Body of pancreas (tissue), 4 donors: ENCODE measurements at regions of chr15 and their contacts with region 1.

Region 1: GRCh38 chr15:38683382-38684242 is 119.0 kb upstream of the RASGRP1 start:
- DNase-seq: peak; percentile 63 to 75 (median 70)
- ATAC-seq: peak; percentile 77
- H3K4me3 ChIP-seq: no peak overlapping the region
- H3K27ac ChIP-seq: no peak overlapping the region
- H3K4me1 ChIP-seq: peaks cover 4% of the 10 kb centered on the region
- H3K27me3 ChIP-seq: no peaks in the 10 kb centered on the region
- CTCF ChIP-seq: peak; percentile 66 to 88 (median 83)
- POLR2A ChIP-seq: no peak

Region 2: DNA sequence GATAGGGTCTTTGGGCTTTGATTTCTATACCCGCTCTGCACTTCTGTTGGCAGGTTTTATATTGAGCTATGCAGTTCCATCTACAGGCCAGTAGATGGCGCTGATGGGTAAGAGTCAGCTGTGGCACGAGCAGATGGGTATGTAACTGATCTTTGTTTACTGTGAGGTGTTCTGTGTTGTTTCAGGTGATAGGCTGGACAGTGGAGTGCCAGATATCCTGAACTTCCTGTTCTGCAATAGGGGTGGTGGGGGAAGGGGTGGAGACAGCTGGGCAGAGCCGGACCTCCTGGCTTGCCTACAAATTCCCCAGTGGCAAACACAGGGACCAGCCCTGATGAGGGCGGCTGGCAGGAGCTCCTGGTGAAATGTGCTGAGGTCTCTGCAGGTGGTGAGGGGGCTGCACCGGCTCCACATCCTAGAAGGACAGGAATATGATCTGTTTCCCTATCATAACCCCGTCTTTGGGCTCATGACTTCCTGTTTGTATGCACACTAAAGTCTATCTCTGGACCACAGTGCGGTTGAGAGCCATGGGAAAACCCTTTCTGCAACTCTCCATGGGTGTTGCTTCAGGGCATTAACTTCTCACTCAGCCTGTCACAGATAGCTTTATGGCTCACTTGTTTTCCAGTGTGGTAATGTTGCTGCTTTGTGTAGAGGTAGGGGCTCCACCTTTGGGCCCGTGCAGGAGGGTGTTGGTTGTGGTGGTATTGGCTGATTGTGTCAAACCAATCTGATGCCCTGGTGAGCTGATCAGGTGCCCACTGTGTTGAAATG is 243.1 kb before region 1 on chr15:
- intact Hi-C with region 1: loop called (anchors 10 kb)
- DNase-seq: peak; percentile 45 to 71 (median 52)
- ATAC-seq: peak; percentile 89
- H3K4me3 ChIP-seq: no peak overlapping the region
- H3K27ac ChIP-seq: peak overlapping the region in 1 of 4 donors; percentile 20
- H3K4me1 ChIP-seq: peaks cover 6% of the 10 kb centered on the region
- H3K27me3 ChIP-seq: no peaks in the 10 kb centered on the region
- CTCF ChIP-seq: peak; percentile 88 to 96 (median 93)
- POLR2A ChIP-seq: peak in 2 of 3 donors; percentile 13 to 23

Region 3: DNA sequence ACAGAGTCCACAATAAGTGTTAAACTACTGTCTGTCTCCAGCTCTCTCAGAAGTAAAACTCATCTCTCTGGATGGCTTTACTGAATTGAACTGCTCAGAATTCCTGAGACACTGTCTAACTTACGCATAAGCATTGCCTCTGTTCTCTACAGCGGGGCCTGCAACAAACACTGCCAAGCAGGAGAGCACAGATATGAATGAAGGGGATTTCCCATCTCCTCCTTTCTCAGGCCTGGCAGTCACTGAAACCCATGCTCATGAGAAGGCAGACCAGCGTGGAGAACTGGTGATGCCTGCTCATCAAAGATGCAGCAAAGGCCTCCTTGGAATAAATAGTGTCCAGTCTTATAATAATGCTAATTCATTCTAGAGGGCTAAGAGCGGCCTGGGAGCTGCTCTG is 129.3 kb before region 1 on chr15:
- intact Hi-C with region 1: loop called (anchors 10 kb)
- DNase-seq: no peak
- ATAC-seq: peak; percentile 53
- H3K4me3 ChIP-seq: no peak overlapping the region
- H3K27ac ChIP-seq: no peak overlapping the region
- H3K4me1 ChIP-seq: no peaks in the 10 kb centered on the region
- H3K27me3 ChIP-seq: no peaks in the 10 kb centered on the region
- CTCF ChIP-seq: no peak
- POLR2A ChIP-seq: no peak